CD8-positive, alpha-beta T cell (primary cell): ENCODE measurements at regions of chr1 and their contacts with region 1.

Region 1: GRCh38 chr1:52365746-52366516 is at the start of gene CC2D1B:
- DNase-seq: peak; percentile 98 to 100 (median 99)
- ATAC-seq: peak; percentile 79
- H3K4me3 ChIP-seq: peak within 1 kb of the TSS; percentile 82 to 89
- H3K4me3 Mint-ChIP-seq: peak within 1 kb of the TSS; percentile 90
- H3K27ac ChIP-seq: peak within 1 kb of the TSS; percentile 88 to 89
- H3K27ac Mint-ChIP-seq: peak within 1 kb of the TSS; percentile 94
- H3K4me1 ChIP-seq: peaks cover 41% of the 10 kb centered on the region
- H3K4me1 Mint-ChIP-seq: peaks cover 41% of the 10 kb centered on the region
- H3K27me3 ChIP-seq: no peaks in the 10 kb centered on the region
- H3K27me3 Mint-ChIP-seq: no peaks in the 10 kb centered on the region
- CTCF ChIP-seq: no peak
- total RNA-seq, gene CC2D1B: 38.8 to 40.6 TPM

Region 2: GRCh38 chr1:50959913-50960844 is 1405.8 kb before region 1 on chr1 and contains the start of gene FAF1:
- CTCF ChIA-PET with region 1: no interaction called
- POLR2A ChIA-PET with region 1: no interaction called
- intact Hi-C with region 1: loop called (anchors 10 kb)
- DNase-seq: peak; percentile 96 to 99 (median 98)
- ATAC-seq: peak; percentile 82
- H3K4me3 ChIP-seq: peak within 1 kb of the TSS; percentile 69 to 82
- H3K4me3 Mint-ChIP-seq: peak within 1 kb of the TSS; percentile 94
- H3K27ac ChIP-seq: peak within 1 kb of the TSS; percentile 74 to 77
- H3K27ac Mint-ChIP-seq: peak within 1 kb of the TSS; percentile 92
- H3K4me1 ChIP-seq: peaks cover 12% of the 10 kb centered on the region
- H3K4me1 Mint-ChIP-seq: peaks cover 31% of the 10 kb centered on the region
- H3K27me3 ChIP-seq: no peaks in the 10 kb centered on the region
- H3K27me3 Mint-ChIP-seq: no peaks in the 10 kb centered on the region
- CTCF ChIP-seq: no peak
- total RNA-seq, gene FAF1: 39.0 to 44.0 TPM

Region 3: GRCh38 chr1:51878616-51879336 is 487.2 kb before region 1 on chr1 and contains the start of gene NRDC:
- CTCF ChIA-PET with region 1: no interaction called
- POLR2A ChIA-PET with region 1: no interaction called
- intact Hi-C with region 1: loop called in 1 of 2 experiments (anchors 2 kb)
- DNase-seq: peak; percentile 99 to 100 (median 99)
- ATAC-seq: peak; percentile 89
- H3K4me3 ChIP-seq: peak within 1 kb of the TSS; percentile 90 to 99
- H3K4me3 Mint-ChIP-seq: no peak within 1 kb of the TSS
- H3K27ac ChIP-seq: peak within 1 kb of the TSS; percentile 89 to 97
- H3K27ac Mint-ChIP-seq: no peak within 1 kb of the TSS
- H3K4me1 ChIP-seq: peaks cover 30% of the 10 kb centered on the region
- H3K4me1 Mint-ChIP-seq: peaks cover 26% of the 10 kb centered on the region
- H3K27me3 ChIP-seq: peaks cover 0 to 2% of the 10 kb centered on the region in 2 experiments
- H3K27me3 Mint-ChIP-seq: peaks cover 13% of the 10 kb centered on the region
- CTCF ChIP-seq: no peak
- total RNA-seq, gene NRDC: 47.6 to 54.3 TPM

Region 4: DNA sequence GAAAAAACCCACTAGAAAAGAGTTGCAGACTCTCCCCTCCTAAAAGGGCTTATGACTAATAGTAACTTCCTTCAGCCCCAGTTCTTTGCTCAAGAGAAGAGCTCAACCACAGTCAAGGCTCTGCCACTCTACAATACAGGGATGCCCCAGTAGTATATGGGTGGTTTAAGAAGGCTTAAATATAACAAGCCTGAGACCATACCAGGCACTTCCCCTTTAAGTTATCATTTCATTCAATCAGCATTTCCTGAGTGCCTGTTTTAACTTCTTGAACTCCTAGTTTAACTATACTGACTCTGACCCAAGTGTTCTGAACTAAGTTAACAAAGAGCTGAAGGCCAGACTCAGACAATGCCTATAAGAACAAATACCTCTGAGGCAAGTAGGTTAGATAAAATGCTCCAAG is 58.3 kb after region 1 on chr1:
- CTCF ChIA-PET with region 1: interaction called, 3 read pairs
- POLR2A ChIA-PET with region 1: interaction called, 10 read pairs
- intact Hi-C with region 1: loop called in 1 of 2 experiments (anchors 1 kb)
- DNase-seq: peak in 8 of 9 experiments; percentile 11 to 81 (median 46)
- ATAC-seq: peak; percentile 91
- H3K4me3 ChIP-seq: no peak overlapping the region
- H3K4me3 Mint-ChIP-seq: peak overlapping the region; percentile 44
- H3K27ac ChIP-seq: peak overlapping the region; percentile 60 to 72
- H3K27ac Mint-ChIP-seq: peak overlapping the region; percentile 99
- H3K4me1 ChIP-seq: peaks cover 44% of the 10 kb centered on the region
- H3K4me1 Mint-ChIP-seq: peaks cover 41% of the 10 kb centered on the region
- H3K27me3 ChIP-seq: no peaks in the 10 kb centered on the region
- H3K27me3 Mint-ChIP-seq: no peaks in the 10 kb centered on the region
- CTCF ChIP-seq: no peak

Region 5: DNA sequence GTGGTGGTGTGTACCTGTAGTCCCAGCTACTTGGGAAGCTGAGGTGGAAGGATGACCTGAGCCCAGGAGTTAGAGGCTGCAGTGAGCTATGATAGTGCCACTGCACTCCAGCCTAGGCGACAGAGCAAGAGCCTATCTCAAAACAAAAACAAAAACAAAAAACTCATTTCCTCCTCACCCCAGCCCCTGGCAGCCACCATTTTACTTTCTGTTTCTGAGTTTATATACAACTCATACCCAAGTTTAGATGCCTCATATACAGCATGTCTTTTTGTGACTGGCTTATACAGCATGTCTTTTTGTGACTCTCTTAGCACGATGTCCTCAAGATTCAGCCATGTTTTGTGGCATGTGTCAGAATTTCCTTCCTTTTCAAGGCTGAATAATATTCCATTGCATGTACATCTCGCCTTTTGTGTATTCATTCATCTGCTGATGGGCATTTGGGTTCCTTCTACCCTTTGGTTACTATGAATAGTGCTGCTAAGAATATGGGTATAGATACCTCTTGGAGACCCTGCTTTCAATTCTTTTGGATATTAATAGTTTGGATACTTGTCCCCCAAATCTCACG is 317.5 kb after region 1 on chr1:
- CTCF ChIA-PET with region 1: no interaction called
- POLR2A ChIA-PET with region 1: no interaction called
- intact Hi-C with region 1: loop called in 1 of 2 experiments (anchors 1 kb)
- DNase-seq: no peak
- ATAC-seq: no peak
- H3K4me3 ChIP-seq: no peak overlapping the region
- H3K4me3 Mint-ChIP-seq: no peak overlapping the region
- H3K27ac ChIP-seq: no peak overlapping the region
- H3K27ac Mint-ChIP-seq: peak overlapping the region; percentile 45
- H3K4me1 ChIP-seq: peaks cover 6% of the 10 kb centered on the region
- H3K4me1 Mint-ChIP-seq: peaks cover 12% of the 10 kb centered on the region
- H3K27me3 ChIP-seq: no peaks in the 10 kb centered on the region
- H3K27me3 Mint-ChIP-seq: no peaks in the 10 kb centered on the region
- CTCF ChIP-seq: no peak

Region 6: DNA sequence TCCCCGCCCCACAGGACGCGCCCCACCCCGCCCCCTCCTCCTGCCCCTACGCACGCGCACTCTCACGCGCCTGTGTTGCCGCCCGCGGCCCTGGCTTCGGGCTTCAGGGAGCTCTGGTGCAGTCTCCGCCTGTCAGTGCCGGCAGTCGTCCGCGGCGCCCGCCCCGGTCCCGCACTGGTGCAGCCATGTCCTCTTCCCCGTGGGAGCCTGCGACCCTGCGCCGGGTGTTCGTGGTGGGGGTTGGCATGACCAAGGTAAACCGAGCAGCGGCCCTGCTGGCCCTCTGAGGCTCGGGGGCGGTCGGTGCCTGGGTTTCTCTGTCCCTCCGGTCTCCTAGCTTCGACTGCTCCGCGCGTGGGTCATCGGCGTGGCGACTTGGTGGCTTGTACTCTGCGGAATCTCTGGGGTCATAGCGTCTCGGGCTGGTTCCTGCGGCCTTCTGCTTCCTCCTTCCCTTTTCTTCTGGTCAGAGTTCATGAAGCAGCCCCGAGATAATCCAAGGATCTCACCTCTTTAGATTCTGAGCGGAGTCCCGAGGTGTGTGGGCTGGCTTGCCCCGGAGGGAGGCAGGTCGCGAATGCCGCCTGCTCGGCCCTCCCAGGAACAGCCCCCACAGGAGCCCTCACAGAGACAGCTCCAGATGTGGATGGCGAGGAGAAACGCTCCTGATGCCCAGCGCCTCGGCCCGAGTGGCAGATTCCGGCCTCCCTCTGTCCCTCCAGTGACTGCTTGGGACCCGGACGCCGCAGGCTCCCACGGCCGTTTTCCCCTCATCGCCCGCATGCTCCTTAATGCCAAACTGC is 561.5 kb after region 1 on chr1 and contains the start of gene SCP2:
- CTCF ChIA-PET with region 1: no interaction called
- POLR2A ChIA-PET with region 1: no interaction called
- intact Hi-C with region 1: loop called in 1 of 2 experiments (anchors 10 kb)
- DNase-seq: peak; percentile 43 to 90 (median 79)
- ATAC-seq: peak; percentile 95
- H3K4me3 ChIP-seq: peak within 1 kb of the TSS; percentile 83 to 88
- H3K4me3 Mint-ChIP-seq: peak within 1 kb of the TSS; percentile 87
- H3K27ac ChIP-seq: peak within 1 kb of the TSS; percentile 8 to 40
- H3K27ac Mint-ChIP-seq: peak within 1 kb of the TSS; percentile 57
- H3K4me1 ChIP-seq: peaks cover 16% of the 10 kb centered on the region
- H3K4me1 Mint-ChIP-seq: peaks cover 23% of the 10 kb centered on the region
- H3K27me3 ChIP-seq: no peaks in the 10 kb centered on the region
- H3K27me3 Mint-ChIP-seq: no peaks in the 10 kb centered on the region
- CTCF ChIP-seq: no peak
- total RNA-seq, gene SCP2: 25.5 to 27.6 TPM

Region 7: GRCh38 chr1:53145942-53146708 is 780.2 kb after region 1 on chr1:
- CTCF ChIA-PET with region 1: no interaction called
- POLR2A ChIA-PET with region 1: no interaction called
- intact Hi-C with region 1: no loop called
- DNase-seq: no peak
- ATAC-seq: no peak
- H3K4me3 ChIP-seq: no peak overlapping the region
- H3K4me3 Mint-ChIP-seq: no peak overlapping the region
- H3K27ac ChIP-seq: no peak overlapping the region
- H3K27ac Mint-ChIP-seq: no peak overlapping the region
- H3K4me1 ChIP-seq: no peaks in the 10 kb centered on the region
- H3K4me1 Mint-ChIP-seq: peaks cover 3% of the 10 kb centered on the region
- H3K27me3 ChIP-seq: no peaks in the 10 kb centered on the region
- H3K27me3 Mint-ChIP-seq: no peaks in the 10 kb centered on the region
- CTCF ChIP-seq: no peak

Region 8: GRCh38 chr1:53945433-53946251 is 1579.7 kb after region 1 on chr1 and contains the start of gene IFT25:
- CTCF ChIA-PET with region 1: no interaction called
- POLR2A ChIA-PET with region 1: no interaction called
- intact Hi-C with region 1: loop called in 1 of 2 experiments (anchors 5 kb)
- DNase-seq: peak; percentile 96 to 100 (median 98)
- ATAC-seq: peak; percentile 81
- H3K4me3 ChIP-seq: peak within 1 kb of the TSS; percentile 81 to 94
- H3K4me3 Mint-ChIP-seq: peak within 1 kb of the TSS; percentile 98
- H3K27ac ChIP-seq: peak within 1 kb of the TSS; percentile 58 to 88
- H3K27ac Mint-ChIP-seq: peak within 1 kb of the TSS; percentile 96
- H3K4me1 ChIP-seq: peaks cover 27% of the 10 kb centered on the region
- H3K4me1 Mint-ChIP-seq: peaks cover 57% of the 10 kb centered on the region
- H3K27me3 ChIP-seq: no peaks in the 10 kb centered on the region
- H3K27me3 Mint-ChIP-seq: no peaks in the 10 kb centered on the region
- CTCF ChIP-seq: no peak
- total RNA-seq, gene IFT25: 12.8 to 13.1 TPM